ENCODE measurements at regions of chr7 and their contacts with region 1.

Region 1: GRCh38 chr7:95545078-95545498 is 51.2 kb downstream of the PDK4 start:
- DNase-seq: peak in 1 of 2 experiments; percentile 43
- H3K4me3 ChIP-seq: no peak overlapping the region
- H3K4me3 Mint-ChIP-seq: peak overlapping the region; percentile 19
- H3K27ac Mint-ChIP-seq: no peak overlapping the region
- H3K4me1 ChIP-seq: no peaks in the 10 kb centered on the region
- H3K4me1 Mint-ChIP-seq: peaks cover 7% of the 10 kb centered on the region
- H3K27me3 ChIP-seq: no peaks in the 10 kb centered on the region
- H3K27me3 Mint-ChIP-seq: peaks cover 2% of the 10 kb centered on the region
- CTCF ChIP-seq: peak; percentile 51 to 80

Region 2: GRCh38 chr7:95577137-95577536 is 32.0 kb after region 1 on chr7:
- CTCF ChIA-PET with region 1: no interaction called
- POLR2A ChIA-PET with region 1: no interaction called
- intact Hi-C with region 1: no loop called
- DNase-seq: peak in 1 of 2 experiments; percentile 36
- H3K4me3 ChIP-seq: no peak overlapping the region
- H3K4me3 Mint-ChIP-seq: no peak overlapping the region
- H3K27ac Mint-ChIP-seq: no peak overlapping the region
- H3K4me1 ChIP-seq: no peaks in the 10 kb centered on the region
- H3K4me1 Mint-ChIP-seq: no peaks in the 10 kb centered on the region
- H3K27me3 ChIP-seq: no peaks in the 10 kb centered on the region
- H3K27me3 Mint-ChIP-seq: peaks cover 12% of the 10 kb centered on the region
- CTCF ChIP-seq: no peak

Region 3: DNA sequence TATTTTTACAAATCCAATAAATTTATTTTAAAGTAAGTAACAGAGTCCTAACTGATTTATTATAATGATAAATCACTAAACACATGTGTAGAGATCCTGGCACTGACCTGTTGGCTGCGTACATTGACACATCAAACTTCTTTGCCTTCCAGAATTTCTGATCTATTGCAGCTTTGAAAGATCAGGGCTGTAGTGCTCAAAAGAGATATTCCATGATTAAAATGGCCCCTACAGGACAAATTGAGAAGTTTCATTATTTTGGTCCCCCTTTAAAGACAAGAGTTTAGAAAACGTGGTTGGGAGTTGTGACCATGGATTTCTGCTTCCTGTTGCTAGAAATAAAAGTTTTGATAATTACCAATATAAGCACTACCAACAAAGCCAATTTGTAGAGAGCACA is 138.9 kb after region 1 on chr7:
- CTCF ChIA-PET with region 1: interaction called, 62 read pairs
- POLR2A ChIA-PET with region 1: no interaction called
- intact Hi-C with region 1: loop called (anchors 1 kb)
- DNase-seq: peak in 1 of 2 experiments; percentile 13
- H3K4me3 ChIP-seq: no peak overlapping the region
- H3K4me3 Mint-ChIP-seq: no peak overlapping the region
- H3K27ac Mint-ChIP-seq: no peak overlapping the region
- H3K4me1 ChIP-seq: peaks cover 5% of the 10 kb centered on the region; the same call in 1 of the 2 replicates
- H3K4me1 Mint-ChIP-seq: peaks cover 5% of the 10 kb centered on the region
- H3K27me3 ChIP-seq: no peaks in the 10 kb centered on the region
- H3K27me3 Mint-ChIP-seq: no peaks in the 10 kb centered on the region
- CTCF ChIP-seq: peak in 1 of 2 experiments; percentile 33

Measured in Caco-2 (cell line).